ENCODE measurements at regions of chr20 and their contacts with region 1.

Region 1: DNA sequence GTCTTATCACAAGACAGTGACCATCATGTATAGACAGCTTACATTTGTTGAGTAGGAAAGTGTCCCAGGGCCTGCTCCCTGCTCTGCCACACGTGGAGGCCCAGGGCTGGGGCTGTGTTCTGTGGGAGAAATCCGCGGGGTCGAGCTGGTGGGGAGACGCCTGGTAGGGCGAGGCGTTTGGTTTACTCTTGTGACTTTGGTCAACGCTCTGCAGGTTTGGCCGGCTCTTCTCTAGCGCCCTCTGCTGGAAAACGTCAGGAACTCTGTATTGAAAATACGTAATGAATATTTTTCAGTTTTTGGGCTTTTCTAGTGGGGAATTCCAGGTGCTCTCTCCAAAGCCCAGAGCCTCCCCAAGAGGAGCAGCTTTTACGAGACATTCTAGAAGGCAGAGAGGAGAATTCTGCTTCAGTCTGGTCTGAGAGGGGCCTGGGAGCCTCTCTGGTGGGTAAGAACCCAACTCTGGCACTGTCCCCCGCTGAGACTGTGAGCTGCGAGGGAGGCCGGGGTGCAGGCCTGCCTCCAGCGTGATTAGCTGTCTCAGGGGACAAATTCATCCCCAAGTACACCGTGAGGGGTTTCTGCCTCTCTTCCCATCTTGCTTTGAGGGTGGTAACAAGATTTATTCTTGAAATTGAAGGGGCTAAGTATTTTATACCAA is 112.6 kb upstream of the RALGAPA2 start:
- DNase-seq: peak; percentile 56 to 65
- ATAC-seq: peak; percentile 55 to 81 (median 72)
- H3K4me3 ChIP-seq: no peak overlapping the region
- H3K27ac ChIP-seq: no peak overlapping the region
- H3K4me1 ChIP-seq: peaks cover 0 to 13% (median 0%) of the 10 kb centered on the region in 9 donors
- H3K27me3 ChIP-seq: peaks cover 0 to 40% (median 11%) of the 10 kb centered on the region in 7 donors
- CTCF ChIP-seq: peak; percentile 76 to 90 (median 87)

Region 2: DNA sequence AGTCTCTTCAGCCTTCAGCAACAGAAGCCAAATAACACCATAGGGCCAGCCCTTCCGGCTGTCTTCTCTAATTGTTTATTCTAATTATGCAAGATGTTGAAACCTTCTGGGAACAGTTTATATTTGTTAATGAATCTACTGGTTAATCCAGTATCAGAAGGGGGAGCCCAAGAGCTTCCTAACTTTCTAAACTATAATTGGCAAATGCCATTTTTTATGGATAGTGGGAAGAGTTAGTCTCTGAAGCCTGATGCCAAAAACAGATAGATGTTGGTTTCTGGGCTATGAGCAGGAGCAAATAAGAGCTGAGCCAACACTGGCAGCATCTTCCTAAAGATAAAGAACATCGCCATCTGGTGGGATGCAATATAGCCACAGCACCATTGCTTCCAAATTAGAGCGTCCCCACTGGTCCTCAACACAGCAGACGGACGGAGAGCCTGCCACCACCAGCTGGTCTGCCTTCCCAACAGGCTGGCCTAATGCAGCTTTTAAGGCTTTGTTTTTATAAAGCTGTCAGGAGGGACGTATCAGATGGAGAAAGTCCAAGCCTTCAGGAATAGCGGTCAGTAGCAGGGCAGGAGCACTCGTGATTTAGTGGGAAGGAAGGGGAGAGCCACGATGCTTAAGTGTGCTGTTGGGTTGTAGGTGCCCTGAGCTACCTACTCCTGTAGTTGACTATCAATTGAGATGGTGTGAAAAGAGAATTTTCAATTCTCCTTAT is 231.4 kb before region 1 on chr20:
- intact Hi-C with region 1: loop called in 4 of 10 experiments (anchors 10 kb)
- DNase-seq: no peak
- ATAC-seq: peak in 6 of 8 donors; percentile 31 to 56 (median 42)
- H3K4me3 ChIP-seq: no peak overlapping the region
- H3K27ac ChIP-seq: no peak overlapping the region
- H3K4me1 ChIP-seq: peaks cover 0 to 12% (median 0%) of the 10 kb centered on the region in 9 donors
- H3K27me3 ChIP-seq: no peaks in the 10 kb centered on the region
- CTCF ChIP-seq: peak in 8 of 9 donors; percentile 12 to 52 (median 46)

Region 3: DNA sequence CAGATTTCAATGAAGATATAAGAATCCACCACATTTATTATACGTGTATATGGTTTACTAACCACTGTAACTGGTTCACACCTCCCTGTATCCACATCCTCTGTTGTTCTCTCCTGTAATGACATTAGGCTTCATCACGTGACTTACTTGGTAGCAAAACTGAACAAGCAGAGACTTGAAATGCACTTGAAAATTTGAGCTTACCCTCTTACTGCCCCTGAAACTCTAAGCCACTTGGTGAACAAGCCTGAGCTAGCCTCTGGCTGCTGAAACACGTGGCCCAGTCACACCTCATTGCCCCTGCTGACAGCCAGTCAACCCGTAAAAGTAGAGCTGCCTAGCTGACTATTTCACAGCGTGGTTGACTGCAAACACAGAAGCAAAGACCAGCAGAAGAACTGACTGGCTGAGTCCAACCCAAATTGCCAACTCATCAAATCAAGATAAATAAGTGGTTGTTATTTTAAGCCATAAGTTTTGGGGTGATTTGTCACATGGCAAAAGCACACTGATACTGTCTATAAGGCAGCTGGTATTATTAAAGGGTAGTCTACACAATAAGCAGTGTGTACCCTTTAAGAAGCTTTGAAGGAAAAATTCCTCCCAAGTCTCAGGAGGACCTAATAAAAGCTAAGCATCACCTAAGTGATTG is 221.6 kb before region 1 on chr20:
- intact Hi-C with region 1: loop called in 5 of 10 experiments (anchors 10 kb)
- DNase-seq: no peak
- ATAC-seq: no peak
- H3K4me3 ChIP-seq: no peak overlapping the region
- H3K27ac ChIP-seq: peak overlapping the region in 1 of 10 donors; percentile 3
- H3K4me1 ChIP-seq: no peaks in the 10 kb centered on the region
- H3K27me3 ChIP-seq: no peaks in the 10 kb centered on the region
- CTCF ChIP-seq: no peak

Region 4: GRCh38 chr20:20664795-20665589 is 160.1 kb before region 1 on chr20:
- intact Hi-C with region 1: loop called (anchors 1 to 5 kb)
- DNase-seq: peak in 1 of 2 donors; percentile 20
- ATAC-seq: peak; percentile 69 to 92 (median 83)
- H3K4me3 ChIP-seq: no peak overlapping the region
- H3K27ac ChIP-seq: no peak overlapping the region
- H3K4me1 ChIP-seq: peaks cover 0 to 39% (median 24%) of the 10 kb centered on the region in 9 donors
- H3K27me3 ChIP-seq: no peaks in the 10 kb centered on the region
- CTCF ChIP-seq: peak; percentile 37 to 81 (median 66)

Region 5: DNA sequence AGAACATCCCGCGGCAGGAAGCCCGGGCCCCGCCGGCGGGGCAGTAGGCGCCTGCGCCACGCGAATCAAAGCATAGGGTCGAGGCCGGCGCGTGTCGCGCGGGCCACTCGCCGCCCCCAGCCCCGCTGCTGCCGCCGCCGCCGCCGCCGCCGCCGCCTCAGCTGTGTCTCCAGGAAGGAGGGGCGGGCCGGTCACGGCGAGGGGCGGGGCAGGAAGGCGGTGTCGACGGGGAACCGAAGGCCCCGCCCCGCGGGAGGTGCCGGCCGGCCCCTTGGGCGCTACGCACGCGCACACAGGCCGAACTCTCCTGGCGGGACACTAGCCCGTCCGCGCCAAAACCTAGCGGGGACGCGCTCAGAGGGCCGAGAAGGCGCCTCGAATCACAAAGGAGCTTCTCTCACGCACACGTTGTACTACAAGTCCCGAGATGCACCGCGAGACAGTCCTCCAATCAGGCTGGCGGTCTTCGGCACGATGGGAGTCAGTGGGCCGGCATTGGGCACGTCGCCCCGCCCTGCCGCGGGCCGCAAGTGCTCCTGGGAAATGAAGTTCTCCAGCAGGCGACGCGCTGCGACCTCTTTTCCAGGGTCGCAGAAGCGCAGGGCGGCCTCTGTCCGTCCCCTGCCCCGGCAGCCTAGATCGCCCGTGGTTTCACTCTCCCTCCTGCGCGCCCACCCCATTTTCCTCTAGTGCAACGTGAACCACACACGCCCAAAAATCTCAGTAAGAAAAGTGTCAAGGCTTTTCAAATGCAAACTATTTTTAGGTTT is 112.4 kb before region 1 on chr20 and contains the start of gene RALGAPA2:
- intact Hi-C with region 1: loop called in 2 of 10 experiments (anchors 5 to 10 kb)
- DNase-seq: peak; percentile 98
- ATAC-seq: peak; percentile 97 to 99 (median 99)
- H3K4me3 ChIP-seq: peak within 1 kb of the TSS; percentile 62 to 97 (median 88)
- H3K27ac ChIP-seq: peak within 1 kb of the TSS; percentile 88 to 97 (median 93)
- H3K4me1 ChIP-seq: peaks cover 0 to 39% (median 22%) of the 10 kb centered on the region in 9 donors
- H3K27me3 ChIP-seq: no peaks in the 10 kb centered on the region
- CTCF ChIP-seq: peak in 5 of 9 donors; percentile 13 to 49 (median 42)
- total RNA-seq, gene RALGAPA2: 14.4 to 26.8 (median 19.5) TPM

Region 6: GRCh38 chr20:20761301-20761700 is 63.8 kb before region 1 on chr20:
- intact Hi-C with region 1: loop called in 1 of 10 experiments (anchors 10 kb)
- DNase-seq: no peak
- ATAC-seq: no peak
- H3K4me3 ChIP-seq: no peak overlapping the region
- H3K27ac ChIP-seq: peak overlapping the region in 1 of 10 donors; percentile 8
- H3K4me1 ChIP-seq: peaks cover 0 to 30% (median 2%) of the 10 kb centered on the region in 9 donors
- H3K27me3 ChIP-seq: no peaks in the 10 kb centered on the region
- CTCF ChIP-seq: no peak

Region 7: GRCh38 chr20:20786428-20786827 is 38.6 kb before region 1 on chr20:
- intact Hi-C with region 1: loop called in 1 of 10 experiments (anchors 5 kb)
- DNase-seq: no peak
- ATAC-seq: no peak
- H3K4me3 ChIP-seq: no peak overlapping the region
- H3K27ac ChIP-seq: no peak overlapping the region
- H3K4me1 ChIP-seq: peaks cover 0 to 35% (median 19%) of the 10 kb centered on the region in 9 donors
- H3K27me3 ChIP-seq: no peaks in the 10 kb centered on the region
- CTCF ChIP-seq: no peak

Region 8: DNA sequence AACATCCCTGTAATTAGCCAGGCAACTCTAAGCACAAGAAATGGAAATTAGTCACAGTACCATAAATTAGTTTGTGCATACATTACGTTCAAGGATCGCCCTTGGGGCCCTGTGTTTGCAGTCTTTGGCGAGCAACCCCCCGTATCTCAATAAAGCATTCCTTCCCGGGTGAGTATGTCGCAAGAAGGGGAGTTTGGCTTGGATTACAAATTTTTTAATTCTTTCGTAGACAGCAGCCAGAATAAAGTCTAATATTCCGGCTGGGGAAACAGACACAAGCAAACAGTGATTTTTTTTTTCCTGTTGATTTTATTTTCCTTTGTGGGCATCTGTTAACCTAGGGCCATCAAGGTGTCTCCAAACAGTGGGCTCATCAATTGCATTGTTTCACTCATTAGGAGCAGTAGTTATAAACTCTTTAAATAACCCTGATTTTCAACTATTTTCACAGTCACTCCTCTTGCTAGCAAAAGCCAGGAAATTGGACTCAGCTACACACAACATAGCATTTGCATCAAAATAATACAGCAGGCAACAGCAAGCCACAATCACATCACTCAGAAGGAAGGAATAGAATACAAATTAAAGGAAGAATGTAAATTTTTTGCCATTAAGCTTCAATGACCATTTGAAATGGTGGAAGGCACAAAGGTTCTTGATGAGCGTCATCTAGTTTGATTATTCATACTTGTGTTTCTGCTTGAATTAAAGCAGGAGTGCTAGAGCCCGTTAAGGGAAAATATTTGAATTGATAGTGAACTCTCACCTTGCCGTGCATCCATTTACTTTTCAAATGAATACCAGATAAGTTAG is 195.8 kb after region 1 on chr20:
- intact Hi-C with region 1: no loop called
- DNase-seq: no peak
- ATAC-seq: peak in 1 of 8 donors; percentile 18
- H3K4me3 ChIP-seq: peak overlapping the region in 1 of 10 donors; percentile 3
- H3K27ac ChIP-seq: no peak overlapping the region
- H3K4me1 ChIP-seq: peaks cover 0 to 4% (median 0%) of the 10 kb centered on the region in 9 donors
- H3K27me3 ChIP-seq: peaks cover 6 to 70% (median 51%) of the 10 kb centered on the region in 7 donors
- CTCF ChIP-seq: no peak